GM23248 (cell line): ENCODE measurements at regions of chr5 and their contacts with region 1.

Region 1: DNA sequence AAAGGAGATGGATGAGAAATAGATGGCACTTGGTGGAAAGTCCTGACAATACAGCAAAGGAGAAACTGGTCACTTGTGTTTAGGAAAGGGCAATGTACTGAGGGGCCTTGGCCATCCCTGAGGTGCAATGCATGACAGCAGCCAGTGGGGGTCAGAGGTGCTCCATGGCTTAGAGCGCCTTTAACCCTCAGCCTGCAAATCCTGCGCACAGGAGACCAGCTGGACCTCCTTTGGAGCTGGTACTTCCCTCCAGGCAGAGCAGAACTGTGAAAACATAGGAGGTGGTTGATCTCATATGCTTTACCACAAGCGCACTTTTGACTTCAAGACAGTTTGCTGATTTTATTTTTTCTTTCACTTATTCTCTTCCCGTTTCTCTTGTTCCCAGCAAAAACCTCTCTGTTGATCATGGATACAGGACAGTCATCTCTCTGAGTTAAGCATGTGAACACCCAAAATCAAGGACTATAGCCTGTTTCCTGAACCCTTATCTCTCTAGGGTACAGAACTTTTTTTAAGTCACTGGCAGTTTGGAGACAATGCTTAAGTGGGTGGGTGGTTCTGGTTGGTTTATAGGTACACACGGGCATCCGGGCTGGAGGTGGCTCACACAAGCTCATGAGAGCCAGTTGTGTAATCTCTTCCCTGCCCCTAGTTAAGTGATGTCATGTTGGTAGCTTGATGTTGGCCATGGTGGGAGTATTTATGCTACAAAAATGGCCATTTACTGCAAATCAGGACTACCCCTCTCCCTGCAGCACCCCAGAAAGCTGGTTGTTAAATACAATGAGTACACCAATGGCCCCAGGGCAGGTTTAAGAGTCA is 37.6 kb upstream of the ANKRD55 start:
- DNase-seq: peak; percentile 90
- H3K4me3 ChIP-seq: no peak overlapping the region
- H3K27ac ChIP-seq: no peak overlapping the region
- H3K4me1 ChIP-seq: no peaks in the 10 kb centered on the region
- H3K27me3 ChIP-seq: no peaks in the 10 kb centered on the region

Region 2: DNA sequence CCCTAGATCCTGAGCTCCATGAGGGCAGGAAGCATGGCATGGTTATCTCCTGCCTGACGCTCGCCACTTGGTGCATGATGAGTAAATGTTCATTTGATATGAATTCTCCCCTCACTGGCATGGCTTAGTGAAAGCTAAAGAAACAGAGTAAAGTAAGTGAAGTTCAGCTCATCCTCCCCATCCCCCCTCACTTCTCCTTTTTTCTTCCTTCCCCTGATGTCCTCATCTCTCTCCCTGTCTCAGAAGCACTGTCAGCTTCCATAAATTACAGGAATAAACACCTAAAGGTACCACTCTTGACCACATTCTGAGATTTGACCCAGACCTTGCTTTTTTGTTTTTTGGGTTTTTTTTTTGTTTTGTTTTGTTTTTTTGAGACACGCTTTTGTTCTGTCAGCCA is 1680.0 kb before region 1 on chr5:
- in situ Hi-C with region 1: no loop called
- DNase-seq: no peak
- H3K4me3 ChIP-seq: no peak overlapping the region
- H3K27ac ChIP-seq: no peak overlapping the region
- H3K4me1 ChIP-seq: no peaks in the 10 kb centered on the region
- H3K27me3 ChIP-seq: no peaks in the 10 kb centered on the region

Region 3: GRCh38 chr5:56838409-56839039 is 567.7 kb after region 1 on chr5:
- in situ Hi-C with region 1: loop called (anchors 5 kb)
- DNase-seq: peak; percentile 76
- H3K4me3 ChIP-seq: peak overlapping the region; percentile 71
- H3K27ac ChIP-seq: peak overlapping the region; percentile 48
- H3K4me1 ChIP-seq: peaks cover 11% of the 10 kb centered on the region
- H3K27me3 ChIP-seq: no peaks in the 10 kb centered on the region

Region 4: GRCh38 chr5:57221049-57221568 is 950.3 kb after region 1 on chr5:
- in situ Hi-C with region 1: loop called (anchors 25 kb)
- DNase-seq: peak; percentile 60
- H3K4me3 ChIP-seq: no peak overlapping the region
- H3K27ac ChIP-seq: 0 out of 2 replicates have a peak overlapping the region, but pooled peaks have one; percentile 13
- H3K4me1 ChIP-seq: peaks cover 10% of the 10 kb centered on the region
- H3K27me3 ChIP-seq: no peaks in the 10 kb centered on the region